ENCODE measurements at regions of chr16 and their contacts with region 1.

Region 1: GRCh38 chr16:71499775-71500364 is 10.7 kb upstream of the ZNF19 start:
- DNase-seq: no peak
- ATAC-seq: peak in 1 of 2 donors; percentile 42

Region 2: DNA sequence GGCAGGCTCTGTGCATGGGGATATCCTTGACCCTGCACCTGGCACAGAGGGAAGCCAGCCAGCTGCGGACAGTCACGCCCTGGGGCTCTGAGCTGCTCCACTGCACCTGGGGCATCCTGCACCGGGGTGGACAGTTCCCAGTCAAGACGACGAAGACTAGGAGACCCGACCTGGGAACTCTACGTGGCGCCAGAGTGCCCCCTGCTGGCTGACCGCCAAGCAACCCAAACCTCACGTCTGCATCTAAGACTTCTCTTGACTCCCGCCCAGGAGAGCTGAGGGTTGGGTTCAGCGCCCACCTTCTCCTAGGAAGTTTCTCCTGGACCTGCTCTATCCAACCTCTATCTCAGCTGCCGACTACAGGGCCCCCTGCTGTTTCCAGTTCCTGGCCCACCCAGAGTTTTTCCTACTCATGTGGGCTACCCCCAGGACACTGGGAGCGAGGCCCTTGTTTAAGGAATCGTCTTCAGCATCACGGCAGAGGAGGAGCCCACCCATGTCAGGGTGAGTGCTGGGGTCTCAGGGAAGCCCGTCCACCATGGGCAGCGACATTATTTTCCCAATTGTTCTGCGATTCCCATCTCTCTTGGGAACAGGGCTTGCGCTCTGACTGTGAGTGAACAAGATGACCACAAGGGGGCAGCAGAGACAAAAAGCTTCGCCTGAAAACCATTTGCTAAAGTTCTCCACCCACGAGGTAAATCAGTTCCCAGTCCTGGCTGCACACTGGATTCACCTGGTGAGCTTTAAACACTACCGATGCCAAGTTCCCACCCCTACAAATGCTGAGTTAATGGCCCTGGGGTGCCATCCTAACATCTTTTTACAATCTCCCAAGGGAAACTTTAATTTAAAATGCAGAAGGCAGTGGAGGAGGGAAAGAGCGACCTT is 87.4 kb before region 1 on chr16:
- intact Hi-C with region 1: loop called (anchors 2 kb)
- DNase-seq: peak; percentile 64
- ATAC-seq: peak; percentile 71 to 73

Region 3: GRCh38 chr16:71645453-71645852 is 145.6 kb after region 1 on chr16:
- intact Hi-C with region 1: no loop called
- DNase-seq: no peak
- ATAC-seq: no peak

Measured in left cardiac atrium (tissue), 4 donors.